Colonic mucosa (tissue), 4 donors: ENCODE measurements at regions of chr6 and their contacts with region 1.

Region 1: GRCh38 chr6:56484669-56485068 is 158.0 kb downstream of the DST start:
- DNase-seq: no peak
- H3K4me3 ChIP-seq: no peak overlapping the region
- H3K27ac ChIP-seq: no peak overlapping the region
- H3K4me1 ChIP-seq: no peaks in the 10 kb centered on the region
- H3K27me3 ChIP-seq: no peaks in the 10 kb centered on the region
- CTCF ChIP-seq: no peak

Region 2: DNA sequence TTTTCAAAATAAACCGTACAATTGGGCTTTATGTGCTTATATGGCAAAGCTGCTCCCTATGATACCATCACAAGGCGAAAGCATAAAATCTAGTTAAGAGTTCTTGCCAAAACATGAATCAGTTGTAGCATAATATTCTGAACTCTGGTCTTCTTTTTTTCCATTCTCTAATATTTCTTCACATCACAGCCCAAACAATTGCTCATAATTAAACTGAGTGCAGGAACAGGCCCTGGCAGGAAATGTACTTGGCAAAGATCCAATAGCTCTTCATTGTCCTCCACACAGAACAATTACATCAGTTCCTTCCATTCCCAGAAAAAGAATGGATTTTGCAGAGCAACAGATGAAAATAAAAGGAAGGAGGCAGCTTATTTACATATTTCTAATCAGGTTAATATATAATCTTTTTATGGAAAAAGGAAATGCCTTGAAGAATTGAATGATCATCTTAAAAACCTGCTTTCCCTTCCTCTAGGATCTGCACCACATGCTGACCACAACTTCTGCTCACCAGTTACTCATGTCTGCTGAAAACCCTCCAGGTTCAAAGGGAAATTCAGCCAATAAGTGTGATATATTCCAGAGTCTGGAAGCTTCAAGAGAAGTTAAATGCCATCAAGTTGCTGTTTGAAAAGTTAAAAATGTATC is 114.0 kb before region 1 on chr6:
- intact Hi-C with region 1: loop called (anchors 5 kb)
- DNase-seq: peak; percentile 41
- H3K4me3 ChIP-seq: no peak overlapping the region
- H3K27ac ChIP-seq: peak overlapping the region; percentile 46
- H3K4me1 ChIP-seq: no peaks in the 10 kb centered on the region
- H3K27me3 ChIP-seq: no peaks in the 10 kb centered on the region
- CTCF ChIP-seq: no peak

Region 3: GRCh38 chr6:56445818-56446217 is 38.9 kb before region 1 on chr6:
- intact Hi-C with region 1: no loop called
- DNase-seq: no peak
- H3K4me3 ChIP-seq: no peak overlapping the region
- H3K27ac ChIP-seq: no peak overlapping the region
- H3K4me1 ChIP-seq: no peaks in the 10 kb centered on the region
- H3K27me3 ChIP-seq: no peaks in the 10 kb centered on the region
- CTCF ChIP-seq: no peak